OCI-LY7 (cell line): ENCODE measurements at regions of chr10 and their contacts with region 1.

Region 1: DNA sequence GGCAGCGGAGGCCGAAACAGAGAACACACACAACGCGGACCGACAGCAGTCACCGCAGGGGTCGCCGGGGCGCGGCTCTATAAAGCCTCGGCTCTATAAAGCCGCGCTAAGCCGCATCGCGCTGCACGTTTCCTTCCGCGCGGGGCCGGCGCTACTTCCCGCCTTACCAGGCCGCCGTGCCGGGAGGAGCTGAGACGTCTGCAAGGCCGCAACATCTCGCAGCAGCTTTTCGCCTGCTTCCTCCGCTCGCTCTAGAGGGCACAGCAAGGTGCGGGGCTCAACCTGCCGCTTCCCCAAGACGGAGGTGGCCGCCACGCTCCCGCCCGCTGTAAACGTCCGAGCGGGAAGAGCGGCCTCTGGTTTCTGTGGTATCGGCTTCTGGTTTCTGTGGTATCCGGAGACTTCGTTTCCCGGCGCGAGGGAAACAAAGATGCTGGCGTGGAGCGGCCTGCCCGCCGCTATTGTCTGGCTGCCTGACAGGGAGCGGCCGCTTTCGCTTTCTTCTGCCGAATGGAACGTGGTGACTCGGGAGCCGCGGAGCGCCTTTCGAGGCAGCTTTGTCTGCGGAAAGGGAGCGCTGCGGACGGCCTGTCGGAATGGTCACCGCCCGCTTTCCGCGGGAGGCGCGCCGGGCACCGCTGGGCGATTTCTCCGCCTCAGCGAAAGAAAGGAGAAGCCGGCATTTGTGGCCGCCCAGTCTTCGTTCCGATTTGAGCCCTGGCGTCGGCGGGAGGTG is 91.8 kb downstream of the SPAG6 start:
- DNase-seq: peak; percentile 32
- H3K4me3 ChIP-seq: peak overlapping the region; percentile 66
- H3K27ac ChIP-seq: no peak overlapping the region
- H3K4me1 ChIP-seq: no peaks in the 10 kb centered on the region
- CTCF ChIP-seq: no peak

Region 2: GRCh38 chr10:22244001-22244400 is 193.1 kb before region 1 on chr10:
- CTCF ChIA-PET with region 1: no interaction called
- POLR2A ChIA-PET with region 1: no interaction called
- intact Hi-C with region 1: loop called (anchors 10 kb)
- DNase-seq: no peak
- H3K4me3 ChIP-seq: no peak overlapping the region
- H3K27ac ChIP-seq: no peak overlapping the region
- H3K4me1 ChIP-seq: no peaks in the 10 kb centered on the region
- CTCF ChIP-seq: peak; percentile 40; the same call in 1 of the 2 replicates

Region 3: DNA sequence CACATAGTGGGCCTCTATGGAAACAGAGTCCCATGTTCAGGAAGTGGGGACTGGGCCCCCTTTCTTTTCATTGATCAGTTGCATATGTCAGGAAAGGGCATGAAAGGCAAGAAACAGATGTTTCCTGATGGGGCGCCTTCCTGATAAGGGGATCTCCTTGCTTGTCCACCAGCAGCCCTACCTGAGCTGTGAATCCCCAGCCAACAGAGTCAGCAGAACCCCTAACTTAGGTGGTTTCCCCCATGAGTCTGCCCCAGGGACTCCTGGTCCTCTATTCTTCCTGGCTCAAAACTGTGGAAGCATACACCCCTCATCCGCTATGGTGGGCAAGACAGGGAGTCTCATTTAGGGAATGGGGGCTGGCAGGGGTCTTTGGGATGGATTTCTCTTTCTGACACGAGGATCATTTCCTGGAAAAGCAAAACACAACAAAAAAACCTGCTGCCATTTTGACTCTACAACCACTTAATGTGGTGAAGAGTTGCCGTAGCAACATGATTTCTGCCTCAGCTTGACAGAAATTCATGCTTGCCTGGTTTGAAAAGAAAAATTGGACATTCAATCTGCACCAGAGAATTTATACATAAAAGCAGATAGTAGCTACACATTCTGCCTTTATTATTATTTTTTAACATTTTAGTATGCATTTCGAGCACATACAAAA is 28.0 kb after region 1 on chr10:
- CTCF ChIA-PET with region 1: no interaction called
- POLR2A ChIA-PET with region 1: no interaction called
- intact Hi-C with region 1: no loop called
- DNase-seq: no peak
- H3K4me3 ChIP-seq: no peak overlapping the region
- H3K27ac ChIP-seq: no peak overlapping the region
- H3K4me1 ChIP-seq: no peaks in the 10 kb centered on the region
- CTCF ChIP-seq: no peak